Panc1 (cell line): ENCODE measurements at regions of chr11 and their contacts with region 1.

Region 1: DNA sequence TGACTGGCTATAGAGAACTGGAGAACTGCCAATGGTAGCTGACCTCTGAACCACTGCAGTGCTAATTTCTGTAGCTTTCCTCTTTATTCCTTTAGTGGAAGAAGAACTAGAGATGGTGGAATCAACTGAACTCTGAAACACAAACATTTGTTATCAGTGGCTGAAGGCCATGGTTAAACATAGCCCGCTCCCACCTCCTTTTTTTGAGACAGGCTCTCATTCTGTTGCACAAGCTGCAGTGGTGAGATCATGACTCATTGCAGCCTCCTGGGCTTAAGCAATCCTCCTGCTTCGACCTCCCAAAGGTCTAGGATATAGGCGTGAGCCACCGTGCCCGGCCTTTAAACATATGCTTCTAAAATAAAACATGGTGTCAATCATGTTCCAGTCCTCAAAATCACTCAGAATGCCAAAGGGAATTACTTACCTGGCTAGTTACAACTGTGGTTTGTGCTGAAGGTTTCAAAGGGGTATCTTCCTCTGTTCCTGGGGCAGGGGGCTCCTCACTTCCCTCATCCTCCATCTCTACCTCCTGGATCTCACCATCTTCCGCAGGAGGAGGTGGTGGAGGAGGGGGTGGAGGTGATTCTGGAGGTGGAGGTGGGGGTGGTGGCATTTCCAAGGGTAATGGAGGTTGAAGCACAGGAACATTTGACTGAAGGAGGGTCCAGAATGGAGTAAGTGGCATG is 9.0 kb upstream of the AGBL2 start:
- DNase-seq: no peak
- ATAC-seq: peak; percentile 50; the same call in 1 of the 2 replicates
- H3K4me3 ChIP-seq: no peak overlapping the region
- H3K27ac ChIP-seq: no peak overlapping the region
- H3K4me1 ChIP-seq: no peaks in the 10 kb centered on the region
- H3K27me3 ChIP-seq: no peaks in the 10 kb centered on the region
- CTCF ChIP-seq: no peak

Region 2: GRCh38 chr11:47512701-47513100 is 211.5 kb before region 1 on chr11:
- CTCF ChIA-PET with region 1: no interaction called
- POLR2A ChIA-PET with region 1: interaction called, 21 read pairs
- in situ Hi-C with region 1: no loop called
- intact Hi-C with region 1: no loop called
- DNase-seq: no peak
- ATAC-seq: no peak
- H3K4me3 ChIP-seq: no peak overlapping the region
- H3K27ac ChIP-seq: peak overlapping the region; percentile 78
- H3K4me1 ChIP-seq: peaks cover 53% of the 10 kb centered on the region
- H3K27me3 ChIP-seq: no peaks in the 10 kb centered on the region
- CTCF ChIP-seq: no peak

Region 3: DNA sequence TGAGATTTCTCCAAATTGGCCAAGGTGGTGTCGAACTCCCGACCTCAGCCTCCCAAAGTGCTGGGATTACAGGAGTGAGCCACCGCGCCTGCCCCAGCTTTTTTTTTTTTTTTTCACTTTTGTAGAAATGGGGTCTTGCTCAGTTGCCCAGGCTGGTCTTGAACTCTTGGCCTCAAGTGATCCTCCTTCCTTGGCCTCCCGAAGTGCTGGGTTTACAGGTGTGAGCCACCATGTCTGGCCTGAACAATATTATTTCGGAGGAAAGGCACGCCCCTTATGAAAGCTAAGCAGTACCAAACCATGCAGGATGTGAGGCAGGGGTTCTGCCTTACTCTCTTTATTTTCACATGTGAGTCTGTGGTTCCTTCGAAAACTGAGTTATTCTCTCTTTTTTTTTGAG is 98.0 kb before region 1 on chr11:
- CTCF ChIA-PET with region 1: no interaction called
- POLR2A ChIA-PET with region 1: interaction called, 13 read pairs
- in situ Hi-C with region 1: no loop called
- intact Hi-C with region 1: no loop called
- DNase-seq: no peak
- ATAC-seq: no peak
- H3K4me3 ChIP-seq: no peak overlapping the region
- H3K27ac ChIP-seq: no peak overlapping the region
- H3K4me1 ChIP-seq: no peaks in the 10 kb centered on the region
- H3K27me3 ChIP-seq: no peaks in the 10 kb centered on the region
- CTCF ChIP-seq: no peak